ENCODE measurements at regions of chr17 and their contacts with region 1.

Region 1: DNA sequence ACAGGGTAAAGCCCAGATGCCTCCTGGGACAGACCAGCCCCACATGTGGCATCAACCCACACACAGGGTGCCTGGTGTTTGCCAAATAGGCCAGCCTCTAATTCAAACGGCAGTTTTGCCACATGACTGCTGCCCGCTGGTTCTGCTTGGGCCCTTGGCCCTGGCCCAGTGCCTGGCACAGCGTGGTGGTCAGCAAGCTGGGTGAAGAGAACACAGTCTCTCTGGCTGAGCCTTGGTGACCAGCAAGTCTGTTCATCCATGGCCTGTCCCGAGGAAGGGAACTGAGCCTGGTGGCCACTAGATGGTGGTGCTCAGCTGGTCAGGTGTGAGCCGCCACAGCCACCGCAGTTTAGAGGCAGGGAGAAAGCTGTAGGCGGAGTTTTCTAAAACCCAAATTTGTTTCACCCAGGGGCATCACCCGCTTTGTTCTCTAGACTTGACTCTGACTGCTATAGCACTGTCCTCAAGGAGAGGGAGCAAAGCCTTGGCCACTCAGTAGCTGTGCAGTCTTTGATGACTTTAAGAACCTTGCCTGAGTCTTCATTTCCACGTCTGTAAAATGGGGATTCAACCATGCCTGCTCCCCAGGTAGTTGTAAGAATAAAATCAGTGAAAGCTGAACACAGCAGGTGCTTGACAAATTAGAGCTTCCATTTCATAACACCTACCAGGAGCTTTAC is 4.7 kb upstream of the GFAP start:
- DNase-seq: peak; percentile 85
- H3K4me3 Mint-ChIP-seq: no peak overlapping the region
- H3K27ac Mint-ChIP-seq: no peak overlapping the region
- H3K4me1 Mint-ChIP-seq: peaks cover 19% of the 10 kb centered on the region
- H3K27me3 Mint-ChIP-seq: no peaks in the 10 kb centered on the region
- CTCF ChIP-seq: peak; percentile 81

Region 2: GRCh38 chr17:44820631-44821212 is 99.3 kb before region 1 on chr17:
- CTCF ChIA-PET with region 1: no interaction called
- POLR2A ChIA-PET with region 1: no interaction called
- intact Hi-C with region 1: no loop called
- DNase-seq: peak; percentile 79
- H3K4me3 Mint-ChIP-seq: peak overlapping the region; percentile 56
- H3K27ac Mint-ChIP-seq: peak overlapping the region; percentile 39
- H3K4me1 Mint-ChIP-seq: peaks cover 13% of the 10 kb centered on the region
- H3K27me3 Mint-ChIP-seq: no peaks in the 10 kb centered on the region
- CTCF ChIP-seq: no peak

Region 3: DNA sequence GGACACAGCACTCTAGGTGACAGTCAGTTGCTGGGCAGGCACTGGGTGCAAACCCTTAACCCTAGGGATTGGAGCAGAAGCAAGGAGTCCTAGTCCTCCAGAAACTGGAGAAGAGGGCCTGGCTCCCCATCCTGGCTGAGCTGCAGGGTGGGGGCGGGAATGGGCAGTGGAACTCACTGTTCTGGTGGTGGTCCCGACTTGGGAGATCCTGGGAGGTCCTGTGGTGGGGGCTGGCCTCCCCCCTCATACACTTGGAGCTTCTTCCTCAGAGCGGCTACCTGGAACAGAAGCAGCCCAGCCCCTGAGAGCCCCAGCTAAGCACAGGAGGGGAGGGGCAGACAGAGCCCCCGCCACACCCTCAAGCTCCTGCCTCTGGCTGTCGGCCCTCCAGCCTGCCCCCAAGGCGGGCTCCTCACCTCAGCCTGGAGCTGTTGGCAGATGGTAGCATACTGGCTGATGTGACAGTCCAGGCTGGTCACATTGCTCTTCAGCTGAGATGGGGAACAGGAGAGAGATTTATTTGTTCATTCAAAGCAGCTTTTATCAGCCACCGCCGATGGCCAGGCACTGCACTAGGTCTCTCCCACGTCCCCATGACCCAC is 12.6 kb after region 1 on chr17:
- CTCF ChIA-PET with region 1: interaction called, 37 read pairs
- POLR2A ChIA-PET with region 1: interaction called, 3 read pairs
- intact Hi-C with region 1: no loop called
- DNase-seq: no peak
- H3K4me3 Mint-ChIP-seq: no peak overlapping the region
- H3K27ac Mint-ChIP-seq: no peak overlapping the region
- H3K4me1 Mint-ChIP-seq: no peaks in the 10 kb centered on the region
- H3K27me3 Mint-ChIP-seq: no peaks in the 10 kb centered on the region
- CTCF ChIP-seq: no peak

Region 4: GRCh38 chr17:44981221-44981968 is 61.4 kb after region 1 on chr17:
- CTCF ChIA-PET with region 1: interaction called, 7 read pairs
- POLR2A ChIA-PET with region 1: interaction called, 6 read pairs
- intact Hi-C with region 1: loop called (anchors 1 kb)
- DNase-seq: peak; percentile 88
- H3K4me3 Mint-ChIP-seq: peak overlapping the region; percentile 70
- H3K27ac Mint-ChIP-seq: peak overlapping the region; percentile 90
- H3K4me1 Mint-ChIP-seq: peaks cover 20% of the 10 kb centered on the region
- H3K27me3 Mint-ChIP-seq: no peaks in the 10 kb centered on the region
- CTCF ChIP-seq: no peak

Region 5: DNA sequence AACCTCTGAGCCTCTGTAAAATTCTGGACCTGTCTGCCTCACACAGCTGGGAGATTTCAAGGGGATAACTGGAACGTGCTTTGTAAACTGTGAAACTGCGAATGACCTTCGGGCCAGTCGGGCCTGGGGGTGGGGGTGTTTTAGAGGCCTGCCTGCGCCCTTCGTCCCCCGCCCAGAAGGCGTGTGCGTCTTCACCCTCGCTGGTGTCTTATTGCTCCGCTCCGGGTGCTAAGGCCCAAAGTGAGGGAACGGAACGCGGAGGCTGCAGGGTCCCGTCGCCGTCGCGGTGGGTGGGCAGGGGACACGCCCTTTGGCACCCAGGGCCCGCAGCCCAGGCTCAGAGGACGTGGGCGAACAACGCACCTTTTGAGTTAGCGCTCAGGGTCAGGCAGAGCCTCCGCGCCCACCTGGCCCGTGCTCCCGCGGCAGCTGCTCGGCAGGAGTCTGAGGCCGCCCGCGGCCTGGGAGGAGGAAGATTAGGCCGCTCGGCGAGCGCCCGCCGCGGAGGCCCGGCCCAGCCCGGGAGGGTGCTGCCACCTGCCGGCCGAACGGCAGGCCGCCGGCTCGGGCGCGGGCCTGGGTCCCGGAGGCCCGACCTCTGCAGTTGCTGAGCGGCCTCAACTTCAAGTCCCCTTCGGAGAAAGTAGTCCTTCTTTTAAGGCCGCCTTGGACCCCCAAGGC is 101.7 kb after region 1 on chr17:
- CTCF ChIA-PET with region 1: interaction called, 211 read pairs
- POLR2A ChIA-PET with region 1: interaction called, 51 read pairs
- intact Hi-C with region 1: loop called (anchors 1 kb)
- DNase-seq: peak; percentile 56
- H3K4me3 Mint-ChIP-seq: no peak overlapping the region
- H3K27ac Mint-ChIP-seq: no peak overlapping the region
- H3K4me1 Mint-ChIP-seq: peaks cover 18% of the 10 kb centered on the region
- H3K27me3 Mint-ChIP-seq: no peaks in the 10 kb centered on the region
- CTCF ChIP-seq: peak; percentile 80

Measured in MCF 10A (cell line).